ENCODE measurements at regions of chr7 and their contacts with region 1.

Region 1: DNA sequence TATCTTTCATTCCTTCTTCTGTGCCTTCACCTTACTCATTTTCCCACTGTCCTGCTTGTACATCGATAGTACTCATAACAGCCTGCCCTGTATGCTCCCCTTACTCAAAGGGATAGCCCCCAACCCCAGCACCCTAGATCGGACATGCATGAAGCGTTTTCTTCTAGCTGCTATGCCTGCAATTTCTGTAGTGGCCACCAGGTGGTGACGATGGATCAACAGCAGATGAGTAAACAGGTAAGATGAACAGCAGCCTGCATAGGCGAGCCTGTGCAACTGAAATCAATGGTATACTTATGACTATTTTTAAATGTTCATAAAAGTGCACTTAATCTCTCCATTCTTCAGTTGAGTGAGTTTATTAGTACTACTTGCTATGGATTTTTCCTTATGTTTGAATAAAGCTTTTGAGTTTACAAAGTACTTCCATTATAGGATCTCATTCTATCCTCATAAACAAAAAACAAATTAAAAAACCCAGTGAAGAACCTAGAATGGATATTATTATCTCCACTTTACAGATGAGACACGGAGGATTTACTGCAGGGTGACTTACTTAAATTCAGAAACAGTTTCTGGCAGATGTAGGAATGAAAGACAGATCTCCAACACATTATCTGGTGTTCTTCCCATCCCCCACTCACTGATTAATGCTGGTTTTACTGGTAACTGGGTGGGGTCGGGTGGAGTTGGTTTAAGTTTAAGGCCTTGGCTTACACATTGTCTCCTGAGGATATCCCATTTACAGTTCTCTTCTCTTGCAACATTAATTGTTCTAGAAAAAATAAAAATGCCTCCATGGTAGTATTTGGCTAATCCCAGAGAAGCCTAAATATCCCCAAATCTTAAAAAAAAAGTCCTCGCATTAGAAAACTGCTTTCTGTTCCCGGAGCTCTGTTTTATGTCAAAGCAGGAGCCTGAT is 222.1 kb downstream of the GLI3 start:
- DNase-seq: peak; percentile 32
- H3K4me3 ChIP-seq: no peak overlapping the region
- H3K27ac ChIP-seq: no peak overlapping the region
- H3K4me1 ChIP-seq: no peaks in the 10 kb centered on the region
- H3K27me3 ChIP-seq: no peaks in the 10 kb centered on the region
- CTCF ChIP-seq: peak; percentile 73 to 85

Region 2: DNA sequence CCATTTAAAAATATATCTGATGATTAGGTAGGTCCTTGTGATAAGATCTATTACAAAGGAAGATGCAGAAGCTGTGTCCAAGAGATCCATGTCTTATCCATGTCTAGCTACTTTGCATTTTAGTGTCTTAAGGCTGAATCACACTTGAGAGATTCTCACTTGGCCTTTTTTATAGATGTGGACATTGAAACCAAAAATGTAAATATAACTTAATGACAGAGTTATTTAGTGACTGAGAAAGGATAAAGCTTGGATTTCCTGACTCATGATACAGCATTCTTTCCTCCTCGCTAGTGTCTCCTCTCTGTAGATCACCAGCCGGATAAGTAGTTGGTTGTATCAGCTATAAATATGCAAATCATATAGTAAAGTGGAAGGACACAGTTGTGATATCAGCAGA is 335.3 kb before region 1 on chr7:
- CTCF ChIA-PET with region 1: no interaction called
- dilution Hi-C with region 1: no loop called
- in situ Hi-C with region 1: no loop called
- intact Hi-C with region 1: no loop called
- DNase-seq: no peak
- H3K4me3 ChIP-seq: no peak overlapping the region
- H3K27ac ChIP-seq: no peak overlapping the region
- H3K4me1 ChIP-seq: no peaks in the 10 kb centered on the region
- H3K27me3 ChIP-seq: no peaks in the 10 kb centered on the region
- CTCF ChIP-seq: no peak

Region 3: GRCh38 chr7:41996381-41997035 is 18.4 kb before region 1 on chr7:
- CTCF ChIA-PET with region 1: no interaction called
- dilution Hi-C with region 1: no loop called
- in situ Hi-C with region 1: no loop called
- intact Hi-C with region 1: no loop called
- DNase-seq: peak; percentile 83
- H3K4me3 ChIP-seq: peak overlapping the region in 2 of 3 experiments; percentile 31
- H3K27ac ChIP-seq: peak overlapping the region; percentile 69
- H3K4me1 ChIP-seq: peaks cover 54% of the 10 kb centered on the region
- H3K27me3 ChIP-seq: no peaks in the 10 kb centered on the region
- CTCF ChIP-seq: no peak

Region 4: GRCh38 chr7:42198974-42199668 is 184.2 kb after region 1 on chr7:
- CTCF ChIA-PET with region 1: no interaction called
- dilution Hi-C with region 1: no loop called
- in situ Hi-C with region 1: no loop called
- intact Hi-C with region 1: no loop called
- DNase-seq: peak; percentile 55
- H3K4me3 ChIP-seq: no peak overlapping the region
- H3K27ac ChIP-seq: peak overlapping the region; percentile 78
- H3K4me1 ChIP-seq: peaks cover 32% of the 10 kb centered on the region
- H3K27me3 ChIP-seq: no peaks in the 10 kb centered on the region
- CTCF ChIP-seq: no peak

Region 5: DNA sequence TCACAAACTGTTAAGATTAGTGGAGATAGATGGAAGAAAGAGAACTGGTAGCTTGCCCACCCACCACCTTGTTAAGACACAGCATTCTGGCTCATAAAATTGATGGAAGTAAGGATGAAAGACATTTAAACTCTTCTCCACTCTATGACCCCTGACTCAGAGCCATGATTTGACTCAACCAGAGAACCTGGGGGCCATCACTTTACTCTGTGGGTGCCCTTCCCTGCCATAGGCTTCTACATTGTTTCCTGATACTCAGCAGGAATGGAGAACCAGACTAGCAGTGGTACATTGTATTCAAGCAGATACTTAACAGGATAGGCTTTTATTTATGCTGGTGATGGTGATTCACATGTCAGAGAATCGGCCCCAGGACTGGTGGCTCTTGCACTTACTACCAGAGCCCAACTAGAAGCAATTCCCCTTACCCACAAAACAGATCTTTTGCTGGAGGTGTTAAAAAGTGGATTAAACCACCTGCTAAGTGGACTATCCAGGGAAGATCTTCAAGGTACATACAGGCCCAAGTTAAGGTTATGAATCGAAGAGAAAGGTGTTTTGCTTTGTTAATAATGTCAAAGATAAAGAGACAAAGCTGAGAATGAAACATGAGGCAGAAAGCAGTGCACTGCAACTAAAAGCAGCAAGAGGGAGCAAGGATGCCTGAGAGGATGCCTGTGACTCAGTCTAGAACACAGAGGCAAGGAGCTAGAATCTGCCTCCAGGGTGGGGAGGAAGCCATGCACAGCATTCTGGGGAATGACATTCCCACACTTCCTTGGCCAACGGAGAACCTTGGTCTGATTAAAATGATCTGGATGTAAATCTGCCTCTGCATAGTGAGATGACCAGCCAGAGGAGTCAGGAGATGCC is 258.1 kb after region 1 on chr7:
- CTCF ChIA-PET with region 1: no interaction called
- dilution Hi-C with region 1: no loop called
- in situ Hi-C with region 1: no loop called
- intact Hi-C with region 1: loop called (anchors 1 kb)
- DNase-seq: peak; percentile 76
- H3K4me3 ChIP-seq: no peak overlapping the region
- H3K27ac ChIP-seq: peak overlapping the region; percentile 70
- H3K4me1 ChIP-seq: peaks cover 20% of the 10 kb centered on the region
- H3K27me3 ChIP-seq: no peaks in the 10 kb centered on the region
- CTCF ChIP-seq: peak; percentile 84 to 86

Measured in mammary epithelial cell (primary cell).